GM12878 (cell line): ENCODE measurements at regions of chr2 and their contacts with region 1.

Region 1: GRCh38 chr2:121400201-121400600 is 115.2 kb upstream of the TFCP2L1 start:
- DNase-seq: no peak
- ATAC-seq: no peak
- H3K4me3 ChIP-seq: no peak overlapping the region
- H3K27ac ChIP-seq: no peak overlapping the region
- H3K4me1 ChIP-seq: no peaks in the 10 kb centered on the region
- H3K27me3 ChIP-seq: no peaks in the 10 kb centered on the region
- CTCF ChIP-seq: no peak
- EP300 ChIP-seq: no peak
- POLR2A ChIP-seq: no peak
- RAD21 ChIP-seq: no peak

Region 2: GRCh38 chr2:121220995-121221394 is 179.2 kb before region 1 on chr2:
- CTCF ChIA-PET with region 1: no interaction called
- POLR2A ChIA-PET with region 1: no interaction called
- RAD21 ChIA-PET with region 1: no interaction called
- SMC1A ChIA-PET with region 1: no interaction called
- in situ Hi-C with region 1: no loop called
- intact Hi-C with region 1: no loop called
- DNase-seq: no peak
- ATAC-seq: no peak
- H3K4me3 ChIP-seq: no peak overlapping the region
- H3K27ac ChIP-seq: no peak overlapping the region
- H3K4me1 ChIP-seq: no peaks in the 10 kb centered on the region
- H3K27me3 ChIP-seq: no peaks in the 10 kb centered on the region; a peak in 2 of 4 replicates
- CTCF ChIP-seq: no peak
- EP300 ChIP-seq: no peak
- POLR2A ChIP-seq: no peak
- RAD21 ChIP-seq: no peak

Region 3: GRCh38 chr2:121412349-121412748 is 12.1 kb after region 1 on chr2:
- CTCF ChIA-PET with region 1: interaction called, 16 read pairs
- POLR2A ChIA-PET with region 1: no interaction called
- RAD21 ChIA-PET with region 1: interaction called, 3 read pairs
- SMC1A ChIA-PET with region 1: no interaction called
- in situ Hi-C with region 1: no loop called
- intact Hi-C with region 1: no loop called
- DNase-seq: no peak
- ATAC-seq: no peak
- H3K4me3 ChIP-seq: no peak overlapping the region
- H3K27ac ChIP-seq: no peak overlapping the region
- H3K4me1 ChIP-seq: no peaks in the 10 kb centered on the region
- H3K27me3 ChIP-seq: no peaks in the 10 kb centered on the region
- CTCF ChIP-seq: no peak
- EP300 ChIP-seq: no peak
- POLR2A ChIP-seq: no peak
- RAD21 ChIP-seq: no peak

Region 4: DNA sequence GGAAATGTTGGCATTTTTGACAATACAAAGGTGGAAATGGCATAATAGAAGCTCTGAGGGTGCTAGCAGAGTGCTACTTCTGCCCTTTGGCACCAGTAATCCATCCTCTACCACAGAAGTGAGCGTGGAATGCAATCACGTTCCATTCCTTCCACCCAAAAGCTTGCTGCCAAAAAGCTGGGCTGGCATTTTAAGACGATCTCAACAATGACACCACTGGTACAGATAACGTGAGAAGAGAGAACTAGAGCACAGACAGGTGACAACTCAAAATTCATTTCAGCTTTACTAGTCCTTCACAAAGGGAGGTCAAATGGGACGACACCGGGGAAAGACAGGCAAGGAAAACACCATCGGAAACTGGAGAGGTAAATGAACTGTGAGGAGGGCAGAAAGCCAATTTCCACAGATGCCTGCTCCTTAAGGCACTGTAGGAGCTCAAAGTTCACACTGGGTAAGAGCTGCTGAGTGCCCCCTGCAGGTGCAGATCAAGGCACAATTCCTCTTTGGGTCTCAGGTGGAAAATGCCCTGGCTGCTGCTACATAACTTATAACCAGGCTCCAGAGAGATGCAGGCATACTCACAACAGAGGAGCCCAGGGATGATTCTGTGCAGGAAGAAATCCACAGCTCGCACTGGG is 79.8 kb after region 1 on chr2:
- CTCF ChIA-PET with region 1: no interaction called
- POLR2A ChIA-PET with region 1: no interaction called
- RAD21 ChIA-PET with region 1: no interaction called
- SMC1A ChIA-PET with region 1: no interaction called
- in situ Hi-C with region 1: no loop called
- intact Hi-C with region 1: no loop called
- DNase-seq: no peak
- ATAC-seq: peak; percentile 53
- H3K4me3 ChIP-seq: no peak overlapping the region
- H3K27ac ChIP-seq: no peak overlapping the region
- H3K4me1 ChIP-seq: no peaks in the 10 kb centered on the region
- H3K27me3 ChIP-seq: no peaks in the 10 kb centered on the region
- CTCF ChIP-seq: 0 out of 6 replicates have a peak, but pooled peaks of 1 of the 3 experiments have one; percentile 29
- EP300 ChIP-seq: no peak
- POLR2A ChIP-seq: no peak
- RAD21 ChIP-seq: no peak

Region 5: GRCh38 chr2:121748202-121748601 is 348.0 kb after region 1 on chr2:
- CTCF ChIA-PET with region 1: interaction called, 8 read pairs
- POLR2A ChIA-PET with region 1: no interaction called
- RAD21 ChIA-PET with region 1: no interaction called
- SMC1A ChIA-PET with region 1: interaction called, 3 read pairs
- in situ Hi-C with region 1: no loop called
- intact Hi-C with region 1: loop called (anchors 10 kb)
- DNase-seq: no peak
- ATAC-seq: peak; percentile 94
- H3K4me3 ChIP-seq: no peak overlapping the region
- H3K27ac ChIP-seq: no peak overlapping the region
- H3K4me1 ChIP-seq: no peaks in the 10 kb centered on the region
- H3K27me3 ChIP-seq: no peaks in the 10 kb centered on the region
- CTCF ChIP-seq: peak; percentile 29 to 40 (median 39); a peak in 4 of 6 replicates
- EP300 ChIP-seq: no peak
- POLR2A ChIP-seq: no peak
- RAD21 ChIP-seq: peak; percentile 52